Naive thymus-derived CD4-positive, alpha-beta T cell (primary cell): ENCODE measurements at regions of chr15 and their contacts with region 1.

Region 1: DNA sequence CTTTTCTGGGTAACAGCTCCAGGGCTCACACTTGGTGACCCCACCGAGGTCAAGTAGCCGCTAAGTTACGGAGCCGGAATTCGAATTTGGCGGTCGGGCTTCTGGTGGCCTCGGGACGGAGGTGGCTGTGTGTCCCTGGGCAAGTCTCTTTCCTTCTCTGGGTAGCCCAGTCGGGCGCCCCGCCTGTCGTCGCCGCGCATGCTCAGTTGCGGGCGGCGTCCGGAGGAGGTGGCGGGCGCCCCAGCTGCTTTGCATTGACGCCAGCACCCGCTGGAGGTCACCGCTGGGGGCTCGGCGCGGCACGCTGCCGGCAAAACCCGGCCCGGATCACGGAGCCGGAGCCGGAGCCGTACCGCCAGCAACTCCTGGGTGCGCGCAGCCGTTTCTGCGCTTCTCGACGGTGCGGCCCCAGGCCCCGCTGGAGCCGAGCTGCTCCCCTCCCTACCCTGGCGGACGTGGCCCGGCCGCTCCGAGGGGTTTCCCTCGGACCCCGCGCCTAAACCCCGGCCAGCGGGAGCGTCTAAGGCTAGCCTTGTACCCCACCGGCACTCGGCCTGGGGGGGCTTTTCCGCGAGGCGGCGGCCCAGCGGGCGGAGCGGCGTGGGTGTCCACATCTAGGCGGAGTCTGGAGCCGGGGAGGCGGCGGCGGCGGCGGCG is 474 bp upstream of the PDE8A start:
- DNase-seq: peak; percentile 94 to 98 (median 97)
- ATAC-seq: peak; percentile 85
- H3K4me3 ChIP-seq: peak overlapping the region; percentile 98
- H3K4me3 Mint-ChIP-seq: peak overlapping the region; percentile 88 to 97 (median 95)
- H3K27ac ChIP-seq: peak overlapping the region; percentile 89
- H3K27ac Mint-ChIP-seq: peak overlapping the region; percentile 85 to 98 (median 94)
- H3K4me1 ChIP-seq: peaks cover 8 to 13% of the 10 kb centered on the region in 2 donors
- H3K4me1 Mint-ChIP-seq: peaks cover 26 to 53% (median 44%) of the 10 kb centered on the region in 7 donors
- H3K27me3 ChIP-seq: no peaks in the 10 kb centered on the region
- H3K27me3 Mint-ChIP-seq: peaks cover 0 to 26% (median 0%) of the 10 kb centered on the region in 5 donors

Region 2: GRCh38 chr15:84570164-84570735 is 410.9 kb before region 1 on chr15:
- CTCF ChIA-PET with region 1: no interaction called
- POLR2A ChIA-PET with region 1: no interaction called
- intact Hi-C with region 1: loop called in 1 of 2 experiments (anchors 1 kb)
- DNase-seq: peak; percentile 13 to 68 (median 40)
- ATAC-seq: peak; percentile 63
- H3K4me3 ChIP-seq: peak overlapping the region; percentile 67
- H3K4me3 Mint-ChIP-seq: peak overlapping the region; percentile 78 to 97 (median 86)
- H3K27ac ChIP-seq: peak overlapping the region; percentile 67
- H3K27ac Mint-ChIP-seq: peak overlapping the region; percentile 65 to 93 (median 82)
- H3K4me1 ChIP-seq: peaks cover 0 to 5% of the 10 kb centered on the region in 2 donors
- H3K4me1 Mint-ChIP-seq: peaks cover 0 to 20% (median 10%) of the 10 kb centered on the region in 7 donors
- H3K27me3 ChIP-seq: no peaks in the 10 kb centered on the region
- H3K27me3 Mint-ChIP-seq: peaks cover 0 to 3% (median 0%) of the 10 kb centered on the region in 5 donors

Region 3: DNA sequence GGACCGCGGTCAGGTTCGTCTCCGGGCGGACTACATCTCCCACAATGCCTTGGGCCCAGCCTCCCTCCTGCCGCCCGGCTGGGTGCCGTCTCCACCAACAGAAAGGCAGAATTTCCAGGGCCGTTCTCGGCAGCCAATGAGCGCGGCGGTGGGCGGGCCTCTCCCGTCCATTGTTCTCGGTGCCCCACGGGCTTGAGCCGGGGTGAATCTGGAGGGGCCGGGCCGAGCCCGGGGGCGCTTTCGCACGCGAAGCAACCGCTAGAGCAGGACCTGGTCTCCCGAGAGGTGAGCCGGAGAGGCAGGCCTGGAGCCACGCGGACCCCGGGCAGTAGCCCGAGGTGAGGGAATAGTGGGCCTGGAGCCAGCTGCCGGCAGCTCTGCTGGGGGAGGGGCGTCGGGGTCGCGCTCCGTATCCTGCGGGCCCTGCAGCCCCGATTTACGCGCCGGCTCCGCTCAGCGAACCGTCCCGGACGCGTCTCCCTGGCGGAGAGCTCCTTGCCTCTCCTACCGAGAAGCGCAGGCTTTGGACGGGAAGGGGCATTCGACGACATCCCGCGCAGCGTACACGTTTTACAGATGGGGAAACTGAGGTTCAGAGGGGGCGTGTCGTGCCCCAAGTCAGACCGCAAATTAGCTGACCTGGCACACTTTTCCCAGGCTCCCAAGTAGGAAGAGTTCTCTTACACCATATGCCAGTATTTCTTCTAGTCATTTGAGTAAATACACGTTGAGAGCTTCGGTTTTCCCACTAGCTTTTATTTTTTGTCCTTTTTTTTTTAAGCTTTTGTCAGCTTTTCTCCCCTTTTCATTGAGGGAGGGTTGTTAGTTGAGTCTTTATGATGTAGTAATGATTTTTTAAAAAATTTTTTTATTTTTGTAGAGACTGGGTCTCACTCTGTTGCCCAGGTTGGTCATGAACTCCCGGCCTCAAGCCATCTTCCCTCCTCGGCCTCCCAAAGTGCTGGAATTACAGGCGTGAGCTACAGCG is 380.0 kb before region 1 on chr15 and contains the start of gene ZSCAN2:
- CTCF ChIA-PET with region 1: no interaction called
- POLR2A ChIA-PET with region 1: interaction called, 5 read pairs
- intact Hi-C with region 1: loop called (anchors 1 kb)
- DNase-seq: peak; percentile 83 to 93 (median 90)
- ATAC-seq: peak; percentile 98
- H3K4me3 ChIP-seq: peak within 1 kb of the TSS; percentile 96
- H3K4me3 Mint-ChIP-seq: peak within 1 kb of the TSS; percentile 89 to 99 (median 96)
- H3K27ac ChIP-seq: peak within 1 kb of the TSS; percentile 77
- H3K27ac Mint-ChIP-seq: peak within 1 kb of the TSS; percentile 67 to 97 (median 88)
- H3K4me1 ChIP-seq: peaks cover 29 to 36% of the 10 kb centered on the region in 2 donors
- H3K4me1 Mint-ChIP-seq: peaks cover 53 to 89% (median 71%) of the 10 kb centered on the region in 7 donors
- H3K27me3 ChIP-seq: no peaks in the 10 kb centered on the region
- H3K27me3 Mint-ChIP-seq: no peaks in the 10 kb centered on the region
- total RNA-seq, gene ZSCAN2: 4.8 to 13.0 (median 6.8) TPM

Region 4: GRCh38 chr15:84658080-84658787 is 322.9 kb before region 1 on chr15 and contains the start of gene NMB:
- CTCF ChIA-PET with region 1: no interaction called
- POLR2A ChIA-PET with region 1: no interaction called
- intact Hi-C with region 1: loop called (anchors 1 kb)
- DNase-seq: peak; percentile 76 to 88 (median 87)
- ATAC-seq: peak; percentile 82
- H3K4me3 ChIP-seq: peak within 1 kb of the TSS; percentile 73
- H3K4me3 Mint-ChIP-seq: peak within 1 kb of the TSS; percentile 78 to 86 (median 83)
- H3K27ac ChIP-seq: peak within 1 kb of the TSS; percentile 76
- H3K27ac Mint-ChIP-seq: peak within 1 kb of the TSS; percentile 74 to 93 (median 84)
- H3K4me1 ChIP-seq: peaks cover 13 to 27% of the 10 kb centered on the region in 2 donors
- H3K4me1 Mint-ChIP-seq: peaks cover 13 to 47% (median 39%) of the 10 kb centered on the region in 7 donors
- H3K27me3 ChIP-seq: no peaks in the 10 kb centered on the region
- H3K27me3 Mint-ChIP-seq: no peaks in the 10 kb centered on the region
- total RNA-seq, gene NMB: 1.2 to 3.1 (median 2.9) TPM

Region 5: DNA sequence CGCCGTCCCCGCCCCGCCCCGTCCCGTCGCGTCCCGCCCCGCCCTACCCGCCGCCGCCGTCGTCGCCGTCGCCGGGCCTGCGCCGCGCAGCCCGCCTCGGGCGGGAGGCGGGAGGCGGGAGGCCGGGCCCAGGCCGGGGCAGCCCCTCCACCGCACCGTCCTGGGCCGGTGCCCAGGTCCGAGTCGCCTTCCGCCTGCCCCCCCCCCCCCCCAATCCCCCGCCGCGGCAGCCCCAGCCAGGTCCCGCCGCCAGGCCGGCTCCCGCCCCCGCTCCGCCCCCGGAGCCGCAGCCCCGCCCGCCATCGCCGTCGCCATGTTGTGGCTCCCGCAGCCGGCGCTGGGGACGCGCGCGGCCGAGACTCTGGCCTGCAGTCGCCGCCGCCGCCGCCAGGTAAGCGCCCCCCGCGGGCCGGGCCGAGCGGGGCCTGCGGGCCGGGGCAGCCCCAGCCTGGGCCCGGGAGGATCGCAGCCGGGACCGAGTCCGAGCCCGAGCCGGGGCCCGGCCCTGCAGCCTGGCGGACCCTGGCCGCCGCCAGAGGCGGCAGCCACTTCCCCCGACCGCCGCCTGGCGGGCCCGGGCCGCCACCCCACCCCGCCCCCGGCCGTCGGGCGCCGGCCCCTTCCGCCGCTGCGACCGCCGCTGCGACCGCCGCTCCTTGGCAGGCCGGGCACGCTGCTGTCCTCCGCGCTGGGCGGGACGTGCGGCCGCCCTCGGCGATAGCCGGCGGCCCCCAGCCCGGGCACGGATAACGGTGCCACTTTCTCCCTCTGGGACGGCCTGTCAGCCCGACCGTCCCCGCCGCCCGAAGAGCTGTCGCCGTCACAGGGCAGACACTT is 232.7 kb before region 1 on chr15 and contains the start of gene ZNF592:
- CTCF ChIA-PET with region 1: no interaction called
- POLR2A ChIA-PET with region 1: interaction called, 3 read pairs
- intact Hi-C with region 1: loop called (anchors 2 kb)
- DNase-seq: peak; percentile 69 to 85 (median 79)
- ATAC-seq: peak; percentile 86
- H3K4me3 ChIP-seq: peak within 1 kb of the TSS; percentile 96
- H3K4me3 Mint-ChIP-seq: peak within 1 kb of the TSS; percentile 94 to 99 (median 99)
- H3K27ac ChIP-seq: peak within 1 kb of the TSS; percentile 89
- H3K27ac Mint-ChIP-seq: peak within 1 kb of the TSS; percentile 94 to 100 (median 99)
- H3K4me1 ChIP-seq: peaks cover 29 to 37% of the 10 kb centered on the region in 2 donors
- H3K4me1 Mint-ChIP-seq: peaks cover 53 to 78% (median 71%) of the 10 kb centered on the region in 7 donors
- H3K27me3 ChIP-seq: no peaks in the 10 kb centered on the region
- H3K27me3 Mint-ChIP-seq: no peaks in the 10 kb centered on the region
- total RNA-seq, gene ZNF592: 36.6 to 39.0 (median 37.6) TPM

Region 6: GRCh38 chr15:84992157-84992944 is 11.2 kb after region 1 on chr15:
- CTCF ChIA-PET with region 1: interaction called, 3 read pairs
- POLR2A ChIA-PET with region 1: interaction called, 11 read pairs
- intact Hi-C with region 1: loop called in 1 of 2 experiments (anchors 1 kb)
- DNase-seq: peak in 1 of 9 donors; percentile 48
- ATAC-seq: peak; percentile 36
- H3K4me3 ChIP-seq: no peak overlapping the region
- H3K4me3 Mint-ChIP-seq: no peak overlapping the region
- H3K27ac ChIP-seq: no peak overlapping the region
- H3K27ac Mint-ChIP-seq: peak overlapping the region in 4 of 9 donors; percentile 18 to 53 (median 36)
- H3K4me1 ChIP-seq: peaks cover 5 to 27% of the 10 kb centered on the region in 2 donors
- H3K4me1 Mint-ChIP-seq: peaks cover 32 to 63% (median 54%) of the 10 kb centered on the region in 7 donors
- H3K27me3 ChIP-seq: no peaks in the 10 kb centered on the region
- H3K27me3 Mint-ChIP-seq: no peaks in the 10 kb centered on the region

Region 7: GRCh38 chr15:85044251-85044853 is 63.2 kb after region 1 on chr15:
- CTCF ChIA-PET with region 1: interaction called, 6 read pairs
- POLR2A ChIA-PET with region 1: interaction called, 15 read pairs
- intact Hi-C with region 1: loop called (anchors 1 to 2 kb)
- DNase-seq: peak in 8 of 9 donors; percentile 15 to 43 (median 30)
- ATAC-seq: peak; percentile 61
- H3K4me3 ChIP-seq: no peak overlapping the region
- H3K4me3 Mint-ChIP-seq: no peak overlapping the region
- H3K27ac ChIP-seq: no peak overlapping the region
- H3K27ac Mint-ChIP-seq: peak overlapping the region in 3 of 9 donors; percentile 15 to 61 (median 53)
- H3K4me1 ChIP-seq: peaks cover 0 to 6% of the 10 kb centered on the region in 2 donors
- H3K4me1 Mint-ChIP-seq: peaks cover 7 to 44% (median 21%) of the 10 kb centered on the region in 7 donors
- H3K27me3 ChIP-seq: no peaks in the 10 kb centered on the region
- H3K27me3 Mint-ChIP-seq: no peaks in the 10 kb centered on the region